ENCODE measurements at regions of chr1 and their contacts with region 1.

Region 1: DNA sequence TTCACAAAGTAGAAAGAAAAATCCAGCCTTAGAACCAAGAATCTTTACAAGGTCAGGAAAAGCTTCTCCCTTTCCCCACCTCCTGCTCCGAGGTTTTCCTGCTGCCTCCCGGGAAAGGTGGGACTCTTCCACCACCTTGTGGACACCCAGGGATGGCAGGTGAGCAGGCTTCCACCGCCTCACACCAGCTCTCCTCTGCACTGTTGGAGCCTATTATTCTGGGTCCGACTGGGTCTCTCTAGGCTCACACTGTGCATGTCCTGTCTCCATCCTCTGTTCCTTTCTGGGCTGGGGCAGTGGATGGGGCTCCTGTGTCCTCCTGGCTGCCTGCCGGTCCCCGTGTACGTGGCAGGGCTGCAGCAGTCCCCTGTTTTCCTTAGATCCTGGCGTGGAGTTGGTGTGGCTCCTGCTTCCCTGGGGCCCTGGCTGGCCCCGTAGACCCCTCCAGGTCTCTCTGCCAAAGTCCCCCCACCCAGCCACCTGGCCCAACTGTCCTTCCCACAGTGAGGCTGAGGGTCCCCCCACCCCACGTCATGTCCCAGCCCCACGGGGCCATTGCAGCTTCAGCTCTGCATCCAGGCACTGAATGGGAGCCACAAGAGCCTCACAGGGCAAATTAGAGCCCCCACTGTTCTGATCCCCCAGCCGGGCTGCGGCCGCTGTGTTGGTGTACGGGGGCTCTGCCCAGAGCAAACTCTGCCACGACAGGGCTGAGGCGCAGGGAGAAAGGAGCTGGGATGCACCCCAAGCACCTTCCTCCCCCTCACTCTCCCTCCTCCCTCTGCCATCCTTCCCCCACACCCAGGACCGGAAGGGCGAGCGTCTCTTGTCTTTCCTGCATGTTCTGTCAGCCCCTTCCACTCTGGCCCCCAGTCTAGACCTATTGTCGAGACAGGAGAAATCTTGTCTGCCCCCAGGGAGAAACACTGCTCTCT is 3.3 kb upstream of the SLC45A1 start:
- DNase-seq: peak; percentile 71 to 86 (median 85)
- ATAC-seq: peak; percentile 95
- H3K4me3 ChIP-seq: no peak overlapping the region
- H3K4me1 ChIP-seq: peaks cover 13% of the 10 kb centered on the region
- CTCF ChIP-seq: peak; percentile 67

Region 2: GRCh38 chr1:7989762-7990428 is 324.7 kb before region 1 on chr1:
- intact Hi-C with region 1: loop called (anchors 10 kb)
- DNase-seq: no peak
- ATAC-seq: no peak
- H3K4me3 ChIP-seq: no peak overlapping the region
- H3K4me1 ChIP-seq: no peaks in the 10 kb centered on the region
- CTCF ChIP-seq: no peak

Region 3: DNA sequence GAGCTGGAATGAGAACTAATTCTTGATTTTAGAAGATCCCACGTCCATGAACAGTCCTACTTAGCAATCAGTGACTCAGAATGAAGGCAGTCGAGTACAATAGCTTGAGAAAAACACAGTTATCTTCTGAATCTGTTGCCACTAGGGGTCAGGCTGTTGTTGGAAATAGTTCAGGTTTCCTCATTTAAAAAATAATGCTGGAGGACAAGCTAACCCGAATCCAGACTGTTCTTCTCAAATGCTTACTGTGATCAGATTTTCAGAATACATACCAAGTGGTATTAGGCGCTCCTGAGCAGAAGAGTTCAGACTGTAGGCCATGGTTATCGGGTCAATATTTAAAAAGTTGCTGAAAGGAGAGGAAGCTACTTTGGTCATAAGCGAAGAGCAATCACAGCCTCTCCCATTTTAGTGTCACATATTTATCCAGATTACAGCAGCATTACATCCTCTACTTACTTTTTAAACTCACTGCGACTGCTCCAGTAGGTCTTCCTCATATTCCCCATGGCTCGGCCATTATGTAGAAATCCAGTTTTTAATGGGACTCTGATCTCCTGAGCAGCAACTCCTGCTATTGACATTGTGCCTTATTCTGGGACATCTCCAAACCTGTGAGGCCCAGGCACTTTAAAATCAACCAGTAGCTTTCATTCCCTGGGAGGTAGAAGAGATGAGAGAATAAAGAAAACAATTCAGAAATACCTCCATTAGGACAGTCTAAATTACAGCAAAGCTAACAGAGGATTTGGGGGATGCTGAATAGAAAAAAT is 299.4 kb before region 1 on chr1:
- intact Hi-C with region 1: loop called (anchors 10 kb)
- DNase-seq: peak in 1 of 3 donors; percentile 88
- ATAC-seq: peak; percentile 73
- H3K4me3 ChIP-seq: no peak overlapping the region
- H3K4me1 ChIP-seq: peaks cover 23% of the 10 kb centered on the region
- CTCF ChIP-seq: no peak

Region 4: DNA sequence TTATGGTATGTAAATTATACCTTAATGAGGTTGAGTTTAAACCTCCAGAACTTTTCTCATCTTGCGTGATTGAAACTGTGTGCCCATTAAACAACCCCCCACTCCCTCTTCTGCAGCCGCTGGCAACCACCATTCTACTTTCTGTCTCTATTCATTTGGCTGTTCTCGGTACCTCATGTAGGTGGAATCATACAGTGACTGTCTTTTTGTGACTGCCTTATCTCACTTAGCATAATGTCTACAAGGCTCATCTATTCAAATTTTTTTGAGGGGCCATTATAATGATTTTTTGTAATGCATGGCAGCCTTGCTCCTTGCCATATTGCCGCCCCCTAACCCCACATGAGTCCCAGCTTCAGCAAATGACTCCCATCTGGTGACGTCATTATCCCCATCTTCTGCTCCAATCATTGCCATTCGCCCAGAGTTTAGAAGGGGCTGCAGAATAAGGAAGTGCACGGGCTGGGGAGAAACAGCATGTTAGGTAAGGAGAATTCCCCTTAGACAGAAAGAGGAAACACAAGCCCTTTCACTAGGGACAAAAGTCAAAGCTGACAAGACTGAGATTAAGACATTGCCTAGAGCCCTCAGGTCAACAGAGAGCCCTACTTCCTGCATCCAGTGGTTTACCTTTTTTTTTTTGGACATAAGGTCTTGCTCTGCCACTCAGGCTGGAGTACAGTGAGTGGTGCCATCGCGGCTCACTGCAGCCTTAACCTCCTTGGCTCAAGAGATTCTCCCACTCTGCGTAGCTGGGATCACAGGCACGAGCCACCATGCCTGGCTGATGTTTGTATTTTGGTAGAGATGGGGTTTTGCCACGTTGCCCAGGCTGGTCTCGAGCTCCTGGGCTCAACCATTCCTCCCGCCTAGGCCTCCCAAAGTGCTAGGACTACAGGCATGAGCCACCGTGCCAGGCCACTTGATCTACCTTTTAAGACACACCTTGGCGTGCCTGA is 210.1 kb before region 1 on chr1:
- intact Hi-C with region 1: no loop called
- DNase-seq: no peak
- ATAC-seq: peak; percentile 36
- H3K4me3 ChIP-seq: no peak overlapping the region
- H3K4me1 ChIP-seq: no peaks in the 10 kb centered on the region
- CTCF ChIP-seq: no peak